ENCODE measurements at regions of chr4 and their contacts with region 1.

Region 1: GRCh38 chr4:25842229-25842845 is 20.5 kb downstream of the SEL1L3 start:
- DNase-seq: peak in 8 of 9 experiments; percentile 29 to 68 (median 60)
- ATAC-seq: peak; percentile 83
- H3K4me3 ChIP-seq: no peak overlapping the region
- H3K4me3 Mint-ChIP-seq: no peak overlapping the region
- H3K27ac ChIP-seq: no peak overlapping the region
- H3K27ac Mint-ChIP-seq: no peak overlapping the region
- H3K4me1 ChIP-seq: peaks cover 20% of the 10 kb centered on the region
- H3K4me1 Mint-ChIP-seq: peaks cover 54% of the 10 kb centered on the region
- H3K27me3 ChIP-seq: no peaks in the 10 kb centered on the region
- H3K27me3 Mint-ChIP-seq: no peaks in the 10 kb centered on the region
- CTCF ChIP-seq: peak; percentile 24

Region 2: DNA sequence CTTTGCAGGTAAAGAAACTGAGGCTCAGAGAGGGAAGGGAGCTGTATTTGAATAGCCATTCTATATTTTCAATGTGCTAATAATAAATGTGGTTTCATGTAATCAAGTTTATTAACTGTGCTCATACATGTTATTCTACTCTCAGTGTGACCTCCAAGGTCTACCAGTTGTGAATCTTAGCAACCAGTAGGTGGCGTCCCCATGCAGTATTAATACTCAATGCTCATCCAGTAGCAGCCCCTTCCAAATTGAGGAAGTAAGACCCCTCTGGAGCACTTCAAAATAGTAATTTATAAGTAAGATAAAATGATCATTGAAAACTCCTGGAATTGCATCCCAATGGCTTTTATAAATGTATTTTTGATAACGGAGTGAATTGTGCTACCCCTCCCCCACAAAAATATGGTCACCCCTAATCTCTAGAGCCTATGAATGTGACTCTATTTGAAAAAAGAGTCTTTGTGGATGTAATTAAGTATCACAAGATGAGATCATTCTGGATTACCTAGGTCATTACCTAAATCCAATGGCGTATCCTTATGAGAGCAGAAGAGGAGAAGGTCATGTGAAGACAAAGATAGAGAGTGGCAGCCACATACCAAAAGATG is 661.7 kb before region 1 on chr4:
- CTCF ChIA-PET with region 1: no interaction called
- POLR2A ChIA-PET with region 1: no interaction called
- intact Hi-C with region 1: no loop called
- DNase-seq: peak in 5 of 9 experiments; percentile 27 to 69 (median 40)
- ATAC-seq: peak; percentile 80
- H3K4me3 ChIP-seq: no peak overlapping the region
- H3K4me3 Mint-ChIP-seq: no peak overlapping the region
- H3K27ac ChIP-seq: no peak overlapping the region
- H3K27ac Mint-ChIP-seq: no peak overlapping the region
- H3K4me1 ChIP-seq: peaks cover 16% of the 10 kb centered on the region
- H3K4me1 Mint-ChIP-seq: peaks cover 18% of the 10 kb centered on the region
- H3K27me3 ChIP-seq: no peaks in the 10 kb centered on the region
- H3K27me3 Mint-ChIP-seq: no peaks in the 10 kb centered on the region
- CTCF ChIP-seq: peak; percentile 89

Region 3: GRCh38 chr4:25552580-25553271 is 289.6 kb before region 1 on chr4:
- CTCF ChIA-PET with region 1: no interaction called
- POLR2A ChIA-PET with region 1: no interaction called
- intact Hi-C with region 1: no loop called
- DNase-seq: no peak
- ATAC-seq: no peak
- H3K4me3 ChIP-seq: no peak overlapping the region
- H3K4me3 Mint-ChIP-seq: no peak overlapping the region
- H3K27ac ChIP-seq: no peak overlapping the region
- H3K27ac Mint-ChIP-seq: no peak overlapping the region
- H3K4me1 ChIP-seq: no peaks in the 10 kb centered on the region
- H3K4me1 Mint-ChIP-seq: no peaks in the 10 kb centered on the region
- H3K27me3 ChIP-seq: no peaks in the 10 kb centered on the region
- H3K27me3 Mint-ChIP-seq: no peaks in the 10 kb centered on the region
- CTCF ChIP-seq: no peak

Region 4: GRCh38 chr4:25862411-25863346 is 20.3 kb after region 1 on chr4 and contains the start of gene SEL1L3:
- CTCF ChIA-PET with region 1: interaction called, 3 read pairs
- POLR2A ChIA-PET with region 1: no interaction called
- intact Hi-C with region 1: loop called (anchors 2 kb)
- DNase-seq: peak in 8 of 9 experiments; percentile 34 to 71 (median 51)
- ATAC-seq: peak; percentile 37
- H3K4me3 ChIP-seq: peak within 1 kb of the TSS; percentile 71 to 72
- H3K4me3 Mint-ChIP-seq: peak within 1 kb of the TSS; percentile 100
- H3K27ac ChIP-seq: peak within 1 kb of the TSS; percentile 54 to 80
- H3K27ac Mint-ChIP-seq: peak within 1 kb of the TSS; percentile 91
- H3K4me1 ChIP-seq: peaks cover 40% of the 10 kb centered on the region
- H3K4me1 Mint-ChIP-seq: peaks cover 41% of the 10 kb centered on the region
- H3K27me3 ChIP-seq: no peaks in the 10 kb centered on the region
- H3K27me3 Mint-ChIP-seq: no peaks in the 10 kb centered on the region
- CTCF ChIP-seq: no peak
- total RNA-seq, gene SEL1L3: 31.2 to 33.7 TPM

Region 5: GRCh38 chr4:25913851-25914669 is 71.7 kb after region 1 on chr4 and contains the start of gene SMIM20:
- CTCF ChIA-PET with region 1: interaction called, 7 read pairs
- POLR2A ChIA-PET with region 1: interaction called, 3 read pairs
- intact Hi-C with region 1: loop called in 1 of 2 experiments (anchors 1 kb)
- DNase-seq: peak; percentile 81 to 95 (median 87)
- ATAC-seq: peak; percentile 94
- H3K4me3 ChIP-seq: peak within 1 kb of the TSS; percentile 72 to 78
- H3K4me3 Mint-ChIP-seq: peak within 1 kb of the TSS; percentile 97
- H3K27ac ChIP-seq: peak within 1 kb of the TSS; percentile 81 to 95
- H3K27ac Mint-ChIP-seq: peak within 1 kb of the TSS; percentile 98
- H3K4me1 ChIP-seq: peaks cover 18% of the 10 kb centered on the region
- H3K4me1 Mint-ChIP-seq: peaks cover 24% of the 10 kb centered on the region
- H3K27me3 ChIP-seq: no peaks in the 10 kb centered on the region
- H3K27me3 Mint-ChIP-seq: no peaks in the 10 kb centered on the region
- CTCF ChIP-seq: no peak
- total RNA-seq, gene SMIM20: 7.5 to 9.8 TPM

Region 6: GRCh38 chr4:25986807-25987206 is 144.5 kb after region 1 on chr4:
- CTCF ChIA-PET with region 1: no interaction called
- POLR2A ChIA-PET with region 1: no interaction called
- intact Hi-C with region 1: loop called in 1 of 2 experiments (anchors 5 kb)
- DNase-seq: no peak
- ATAC-seq: no peak
- H3K4me3 ChIP-seq: no peak overlapping the region
- H3K4me3 Mint-ChIP-seq: no peak overlapping the region
- H3K27ac ChIP-seq: no peak overlapping the region
- H3K27ac Mint-ChIP-seq: no peak overlapping the region
- H3K4me1 ChIP-seq: no peaks in the 10 kb centered on the region
- H3K4me1 Mint-ChIP-seq: peaks cover 4% of the 10 kb centered on the region
- H3K27me3 ChIP-seq: peaks cover 0 to under 1% of the 10 kb centered on the region in 2 experiments
- H3K27me3 Mint-ChIP-seq: peaks cover 5% of the 10 kb centered on the region
- CTCF ChIP-seq: no peak

Region 7: GRCh38 chr4:26028793-26029567 is 186.6 kb after region 1 on chr4:
- CTCF ChIA-PET with region 1: interaction called, 3 read pairs
- POLR2A ChIA-PET with region 1: no interaction called
- intact Hi-C with region 1: loop called in 1 of 2 experiments (anchors 2 kb)
- DNase-seq: peak; percentile 27 to 63 (median 46)
- ATAC-seq: peak; percentile 75
- H3K4me3 ChIP-seq: no peak overlapping the region
- H3K4me3 Mint-ChIP-seq: no peak overlapping the region
- H3K27ac ChIP-seq: no peak overlapping the region
- H3K27ac Mint-ChIP-seq: no peak overlapping the region
- H3K4me1 ChIP-seq: no peaks in the 10 kb centered on the region
- H3K4me1 Mint-ChIP-seq: peaks cover 2% of the 10 kb centered on the region
- H3K27me3 ChIP-seq: peaks cover 0 to 2% of the 10 kb centered on the region in 2 experiments
- H3K27me3 Mint-ChIP-seq: peaks cover 19% of the 10 kb centered on the region
- CTCF ChIP-seq: peak; percentile 29

Region 8: GRCh38 chr4:26081795-26082498 is 239.6 kb after region 1 on chr4:
- CTCF ChIA-PET with region 1: interaction called, 4 read pairs
- POLR2A ChIA-PET with region 1: no interaction called
- intact Hi-C with region 1: loop called in 1 of 2 experiments (anchors 5 kb)
- DNase-seq: peak in 2 of 9 experiments; percentile 58 to 66
- ATAC-seq: no peak
- H3K4me3 ChIP-seq: no peak overlapping the region
- H3K4me3 Mint-ChIP-seq: no peak overlapping the region
- H3K27ac ChIP-seq: no peak overlapping the region
- H3K27ac Mint-ChIP-seq: no peak overlapping the region
- H3K4me1 ChIP-seq: no peaks in the 10 kb centered on the region
- H3K4me1 Mint-ChIP-seq: peaks cover 4% of the 10 kb centered on the region
- H3K27me3 ChIP-seq: no peaks in the 10 kb centered on the region
- H3K27me3 Mint-ChIP-seq: peaks cover 17% of the 10 kb centered on the region
- CTCF ChIP-seq: peak; percentile 53

Region 9: GRCh38 chr4:26741491-26741871 is 899.1 kb after region 1 on chr4:
- CTCF ChIA-PET with region 1: no interaction called
- POLR2A ChIA-PET with region 1: no interaction called
- intact Hi-C with region 1: no loop called
- DNase-seq: no peak
- ATAC-seq: no peak
- H3K4me3 ChIP-seq: no peak overlapping the region
- H3K4me3 Mint-ChIP-seq: no peak overlapping the region
- H3K27ac ChIP-seq: no peak overlapping the region
- H3K27ac Mint-ChIP-seq: no peak overlapping the region
- H3K4me1 ChIP-seq: no peaks in the 10 kb centered on the region
- H3K4me1 Mint-ChIP-seq: no peaks in the 10 kb centered on the region
- H3K27me3 ChIP-seq: no peaks in the 10 kb centered on the region
- H3K27me3 Mint-ChIP-seq: no peaks in the 10 kb centered on the region
- CTCF ChIP-seq: no peak